Activated CD8-positive, alpha-beta T cell treated with anti-CD3 and anti-CD28 coated beads for 36 hours (primary cell): ENCODE measurements at regions of chr11 and their contacts with region 1.

Region 1: GRCh38 chr11:64317957-64318693 is at the start of gene PRDX5:
- DNase-seq: peak; percentile 93
- ATAC-seq: peak; percentile 86
- H3K4me3 Mint-ChIP-seq: peak within 1 kb of the TSS; percentile 94
- H3K27ac Mint-ChIP-seq: peak within 1 kb of the TSS; percentile 100
- H3K4me1 Mint-ChIP-seq: peaks cover 22% of the 10 kb centered on the region
- H3K27me3 Mint-ChIP-seq: no peaks in the 10 kb centered on the region
- CTCF ChIP-seq: peak; percentile 24
- total RNA-seq, gene PRDX5: 103 to 105 TPM

Region 2: DNA sequence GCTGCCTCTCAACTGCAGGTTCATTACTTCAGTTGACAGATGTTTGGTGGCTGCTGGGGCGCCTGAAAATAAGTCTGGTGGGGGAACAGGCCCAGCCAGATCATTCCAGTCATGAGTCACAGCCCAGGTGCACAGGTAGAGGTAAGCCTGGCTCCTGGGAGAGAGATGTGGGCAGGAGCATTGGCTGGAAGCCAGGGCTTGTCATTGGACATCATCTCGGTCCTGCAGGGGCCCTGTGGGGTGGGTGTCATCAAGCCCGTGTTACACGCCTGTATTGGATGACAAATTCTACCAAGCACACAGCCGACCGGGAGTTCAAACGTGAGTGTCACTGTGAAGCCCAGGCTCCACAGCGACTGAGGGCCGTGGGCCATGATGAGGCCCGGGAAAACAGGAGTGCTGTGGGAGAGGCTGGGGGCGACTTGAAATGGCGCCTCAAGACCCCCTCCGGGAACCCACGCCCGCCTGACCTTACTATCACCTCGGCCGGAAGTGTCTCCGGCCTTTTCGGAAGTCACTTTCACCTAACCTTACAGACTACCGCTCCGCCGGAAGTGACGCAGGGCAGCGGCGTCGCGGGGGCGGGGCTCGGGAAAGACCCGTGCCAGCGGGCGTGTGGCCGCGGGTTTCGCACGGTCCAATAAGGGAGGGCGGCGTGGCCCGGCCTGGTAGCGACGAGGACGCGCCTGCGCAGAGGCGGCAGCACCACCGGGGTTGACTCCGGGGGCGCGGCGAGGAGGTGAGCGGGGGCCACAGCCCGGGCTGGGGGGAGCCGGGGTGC is 77.5 kb before region 1 on chr11 and contains the start of gene FKBP2:
- CTCF ChIA-PET with region 1: interaction called, 8 read pairs
- POLR2A ChIA-PET with region 1: interaction called, 18 read pairs
- intact Hi-C with region 1: no loop called
- DNase-seq: peak; percentile 98
- ATAC-seq: peak; percentile 64
- H3K4me3 Mint-ChIP-seq: peak within 1 kb of the TSS; percentile 93
- H3K27ac Mint-ChIP-seq: peak within 1 kb of the TSS; percentile 98
- H3K4me1 Mint-ChIP-seq: peaks cover 44% of the 10 kb centered on the region
- H3K27me3 Mint-ChIP-seq: no peaks in the 10 kb centered on the region
- CTCF ChIP-seq: no peak
- total RNA-seq, gene FKBP2: 23.5 to 26.9 TPM

Region 3: DNA sequence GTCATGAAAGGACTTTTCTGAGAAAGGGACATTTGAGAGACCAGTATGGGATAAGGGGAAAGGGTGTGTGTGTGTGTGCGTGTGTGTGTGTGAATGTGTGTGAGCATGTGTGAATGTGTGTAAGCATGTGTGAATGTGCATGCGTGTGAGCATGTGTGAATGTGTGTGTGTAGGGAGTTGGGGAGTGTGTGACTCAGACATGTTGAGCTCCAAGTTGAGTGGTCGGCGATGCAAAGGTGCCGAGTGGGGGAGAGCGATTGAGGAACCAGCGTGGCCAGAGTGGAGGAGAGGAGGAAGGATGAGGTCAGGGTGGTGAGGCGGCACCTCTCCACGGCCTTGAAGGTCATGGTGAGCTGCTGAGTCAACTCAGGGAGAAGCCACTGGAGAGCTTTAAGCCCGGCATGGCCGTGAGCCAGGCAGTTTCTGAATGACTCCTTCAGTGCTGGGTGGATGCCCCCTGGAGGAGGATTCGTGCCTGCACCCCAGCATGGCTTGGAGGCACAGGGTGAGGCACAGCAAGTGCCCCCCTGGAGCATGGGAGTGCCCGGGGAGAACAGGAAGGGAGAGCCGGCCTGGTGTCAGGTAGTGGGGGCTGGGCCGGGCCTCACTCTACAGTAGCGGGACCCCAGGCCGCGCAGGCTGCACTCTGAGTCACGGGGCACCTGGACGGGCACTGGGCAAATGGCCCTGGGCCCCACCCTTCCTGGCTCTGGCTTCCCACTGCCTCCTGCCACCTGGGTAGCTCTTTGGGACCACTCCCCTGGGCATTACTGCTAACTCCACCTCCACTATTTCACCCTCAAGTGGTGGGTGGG is 13.6 kb after region 1 on chr11:
- CTCF ChIA-PET with region 1: interaction called, 75 read pairs
- POLR2A ChIA-PET with region 1: interaction called, 29 read pairs
- intact Hi-C with region 1: no loop called
- DNase-seq: peak; percentile 96
- ATAC-seq: peak; percentile 89
- H3K4me3 Mint-ChIP-seq: peak overlapping the region; percentile 0
- H3K27ac Mint-ChIP-seq: peak overlapping the region; percentile 75
- H3K4me1 Mint-ChIP-seq: peaks cover 24% of the 10 kb centered on the region
- H3K27me3 Mint-ChIP-seq: no peaks in the 10 kb centered on the region
- CTCF ChIP-seq: peak; percentile 67

Region 4: DNA sequence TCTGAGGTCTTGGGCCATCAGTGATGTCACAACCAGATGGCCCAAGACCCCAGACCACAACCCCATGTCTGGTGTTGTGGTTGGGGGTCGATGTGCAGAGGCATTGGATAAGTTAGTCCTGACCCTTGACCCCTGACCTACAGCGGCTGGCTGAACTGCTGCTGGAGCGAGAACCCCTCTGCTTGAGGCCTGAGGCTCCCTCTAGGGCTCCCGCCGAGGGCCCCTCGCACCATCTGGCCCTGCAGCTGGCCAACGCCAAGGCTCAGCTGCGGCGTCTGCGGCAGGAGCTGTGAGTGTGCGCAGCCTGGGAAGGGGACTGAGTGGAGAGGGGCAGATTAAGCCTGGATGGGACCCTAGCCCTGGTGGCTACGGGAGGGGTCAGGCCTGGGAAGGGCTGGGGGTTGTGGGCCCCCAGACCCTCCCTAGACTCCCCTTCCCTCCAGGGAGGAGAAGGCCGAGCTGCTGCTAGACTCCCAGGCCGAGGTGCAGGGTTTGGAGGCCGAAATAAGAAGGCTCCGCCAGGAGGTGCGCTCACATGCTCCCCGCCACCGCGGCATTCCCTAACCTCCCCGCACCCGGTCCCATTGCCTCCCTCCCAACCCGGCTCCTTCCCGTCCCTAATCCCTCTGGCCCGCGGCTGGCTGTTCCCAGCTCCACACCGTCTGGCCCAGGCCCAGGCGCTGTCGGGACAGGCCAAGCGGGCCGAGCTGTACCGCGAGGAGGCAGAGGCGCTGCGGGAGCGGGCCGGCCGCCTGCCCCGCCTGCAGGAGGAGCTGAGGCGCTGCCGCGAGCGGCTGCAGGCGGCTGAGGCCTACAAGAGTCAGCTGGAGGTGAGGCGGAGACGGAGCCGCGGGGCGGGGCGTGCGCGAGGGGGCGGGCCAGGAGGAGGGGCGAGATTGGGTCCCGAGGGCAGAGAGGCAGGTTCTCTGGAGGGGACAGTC is 24.0 kb after region 1 on chr11:
- CTCF ChIA-PET with region 1: interaction called, 33 read pairs
- POLR2A ChIA-PET with region 1: interaction called, 9 read pairs
- intact Hi-C with region 1: no loop called
- DNase-seq: peak; percentile 94
- ATAC-seq: peak; percentile 75
- H3K4me3 Mint-ChIP-seq: peak overlapping the region; percentile 84
- H3K27ac Mint-ChIP-seq: no peak overlapping the region
- H3K4me1 Mint-ChIP-seq: peaks cover 36% of the 10 kb centered on the region
- H3K27me3 Mint-ChIP-seq: no peaks in the 10 kb centered on the region
- CTCF ChIP-seq: peak; percentile 44

Region 5: DNA sequence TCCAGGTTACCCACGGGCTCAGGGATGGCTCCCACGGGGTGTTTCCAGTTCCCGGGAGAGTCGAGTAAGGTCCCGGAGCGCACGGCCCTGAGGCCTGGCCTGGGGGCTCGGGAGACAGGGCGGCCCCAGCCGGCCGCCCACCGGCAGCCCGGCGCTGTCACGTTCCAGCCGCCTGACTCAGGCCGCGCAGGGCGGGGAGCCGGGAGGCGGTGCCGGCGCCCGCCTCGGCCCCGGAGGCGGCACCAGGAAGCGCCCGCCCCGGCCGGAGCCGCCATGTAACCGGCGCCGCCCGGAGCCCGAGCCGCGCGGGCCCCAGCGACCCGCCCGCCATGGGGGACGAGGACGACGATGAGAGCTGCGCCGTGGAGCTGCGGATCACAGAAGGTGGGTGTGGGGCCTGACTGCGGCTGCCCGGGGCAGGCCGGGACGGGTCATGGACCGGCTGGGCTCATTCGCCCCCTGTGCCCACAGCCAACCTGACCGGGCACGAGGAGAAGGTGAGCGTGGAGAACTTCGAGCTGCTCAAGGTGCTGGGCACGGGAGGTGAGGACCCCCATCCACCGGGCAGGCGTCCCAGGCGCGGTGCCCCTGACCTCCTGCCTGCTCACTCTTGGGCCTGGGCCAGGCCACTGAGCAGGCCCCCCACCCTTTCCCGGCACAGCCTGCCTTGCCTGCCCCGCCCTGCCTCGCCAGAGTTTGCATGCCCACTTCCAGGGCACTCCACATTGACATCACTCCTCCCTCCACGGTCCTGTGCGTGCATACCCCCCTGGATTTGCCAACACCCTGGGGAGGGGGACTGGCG is 41.0 kb after region 1 on chr11 and contains the start of gene RPS6KA4:
- CTCF ChIA-PET with region 1: interaction called, 18 read pairs
- POLR2A ChIA-PET with region 1: interaction called, 11 read pairs
- intact Hi-C with region 1: no loop called
- DNase-seq: peak; percentile 64
- ATAC-seq: peak; percentile 68
- H3K4me3 Mint-ChIP-seq: peak within 1 kb of the TSS; percentile 79
- H3K27ac Mint-ChIP-seq: peak within 1 kb of the TSS; percentile 87
- H3K4me1 Mint-ChIP-seq: peaks cover 48% of the 10 kb centered on the region
- H3K27me3 Mint-ChIP-seq: no peaks in the 10 kb centered on the region
- CTCF ChIP-seq: no peak
- total RNA-seq, gene RPS6KA4: 24.6 to 26.0 TPM